ENCODE measurements at regions of chr19 and their contacts with region 1.

Region 1: GRCh38 chr19:40305403-40305802 is 20.3 kb upstream of the AKT2 start:
- DNase-seq: peak; percentile 83
- H3K4me3 ChIP-seq: no peak overlapping the region
- H3K27ac ChIP-seq: no peak overlapping the region
- H3K27me3 ChIP-seq: no peaks in the 10 kb centered on the region
- CTCF ChIP-seq: peak; percentile 79

Region 2: DNA sequence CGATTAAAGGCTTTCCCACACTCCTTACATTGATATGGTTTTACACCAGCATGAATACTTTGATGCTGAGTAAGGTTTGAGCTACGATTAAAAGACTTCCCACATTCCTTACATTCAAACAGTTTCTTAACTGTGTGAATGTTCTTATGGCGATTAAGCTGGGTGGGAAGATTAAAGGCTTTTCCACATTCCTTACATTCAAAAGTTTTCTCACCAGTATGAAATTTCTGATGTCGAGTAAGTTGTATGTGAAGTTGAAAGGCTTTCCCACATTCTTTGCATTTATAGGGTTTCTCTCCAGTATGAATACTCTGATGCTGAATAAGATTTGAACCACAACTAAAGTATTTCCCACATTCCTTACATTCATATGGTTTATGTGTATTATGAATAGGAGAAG is 269.4 kb before region 1 on chr19:
- CTCF ChIA-PET with region 1: no interaction called
- POLR2A ChIA-PET with region 1: no interaction called
- DNase-seq: no peak
- H3K4me3 ChIP-seq: no peak overlapping the region
- H3K27ac ChIP-seq: no peak overlapping the region
- H3K27me3 ChIP-seq: no peaks in the 10 kb centered on the region
- CTCF ChIP-seq: no peak

Region 3: DNA sequence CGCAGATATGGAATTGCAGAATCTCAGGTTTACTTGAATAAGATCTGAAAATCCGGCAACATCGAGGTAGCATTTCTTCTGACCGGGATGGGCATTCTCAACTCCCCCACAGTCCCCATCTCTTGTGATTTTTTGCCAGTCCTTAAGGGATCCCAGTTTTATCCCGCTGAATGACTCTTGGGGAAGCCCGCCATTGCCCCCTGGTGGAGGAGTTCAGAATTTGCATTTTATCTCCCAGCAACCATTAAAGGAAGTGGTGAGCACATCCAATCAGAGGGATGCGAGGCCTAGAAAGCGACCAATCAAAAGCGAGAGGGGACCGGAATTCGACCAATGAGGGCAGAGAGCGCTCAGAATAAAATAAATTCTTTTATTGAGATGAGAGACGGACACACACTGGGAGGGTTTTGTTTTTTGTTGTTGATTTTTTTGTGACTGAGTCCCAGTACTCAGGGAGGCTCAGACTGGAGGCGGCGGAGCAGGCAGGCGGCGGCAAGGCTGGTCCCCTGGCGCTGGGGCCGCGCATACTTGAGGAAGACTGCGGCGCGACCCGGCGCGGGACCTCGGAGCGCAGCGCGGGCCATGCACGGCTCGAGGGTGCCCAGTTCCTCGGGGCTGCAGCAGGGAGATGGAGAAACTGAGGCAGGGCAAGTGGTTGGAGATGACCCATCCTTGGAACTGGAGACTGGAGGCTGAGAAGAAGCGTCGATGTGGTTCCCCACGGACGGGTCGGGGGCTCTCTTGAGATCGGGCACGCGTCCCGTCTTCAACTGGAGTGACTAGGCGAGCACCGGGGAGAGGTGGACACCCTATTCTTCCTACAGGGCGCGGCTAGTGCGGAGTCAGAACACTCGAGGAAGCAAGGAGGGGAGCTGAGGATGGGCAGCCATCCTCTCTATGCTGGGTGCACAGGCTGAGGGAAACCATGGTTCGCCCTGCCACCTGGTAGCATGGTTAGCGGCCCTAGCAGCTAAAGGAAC is 83.3 kb before region 1 on chr19:
- CTCF ChIA-PET with region 1: no interaction called
- POLR2A ChIA-PET with region 1: no interaction called
- DNase-seq: peak; percentile 73
- H3K4me3 ChIP-seq: no peak overlapping the region
- H3K27ac ChIP-seq: no peak overlapping the region
- H3K27me3 ChIP-seq: peaks cover 12% of the 10 kb centered on the region
- CTCF ChIP-seq: peak; percentile 91

Region 4: GRCh38 chr19:40285353-40286234 is 19.8 kb before region 1 on chr19:
- CTCF ChIA-PET with region 1: interaction called, 11 read pairs
- POLR2A ChIA-PET with region 1: no interaction called
- DNase-seq: peak; percentile 99
- H3K4me3 ChIP-seq: peak overlapping the region; percentile 83
- H3K27ac ChIP-seq: peak overlapping the region; percentile 89
- H3K27me3 ChIP-seq: no peaks in the 10 kb centered on the region
- CTCF ChIP-seq: no peak

Region 5: DNA sequence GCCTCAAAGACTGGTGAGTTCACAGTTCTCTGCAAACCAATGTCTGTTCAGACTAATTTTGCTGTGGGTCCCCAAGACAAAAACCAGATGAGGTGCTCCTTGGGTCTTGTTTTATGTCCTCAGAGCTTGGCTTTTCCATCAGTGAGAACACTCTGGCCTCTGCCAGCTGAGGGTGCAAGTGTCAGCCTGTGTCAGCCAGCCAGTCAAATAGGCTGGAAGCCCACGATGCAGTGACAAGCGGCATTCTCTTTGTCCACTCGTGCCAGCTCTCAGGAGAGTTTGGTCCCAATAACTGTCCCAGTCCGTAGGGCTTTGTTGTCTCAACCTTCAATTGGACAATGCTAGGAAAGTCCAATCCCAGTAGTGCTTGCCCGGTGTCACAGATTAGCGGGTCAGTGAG is 10.8 kb before region 1 on chr19:
- CTCF ChIA-PET with region 1: interaction called, 14 read pairs
- POLR2A ChIA-PET with region 1: no interaction called
- DNase-seq: no peak
- H3K4me3 ChIP-seq: no peak overlapping the region
- H3K27ac ChIP-seq: no peak overlapping the region
- H3K27me3 ChIP-seq: no peaks in the 10 kb centered on the region
- CTCF ChIP-seq: no peak

Region 6: DNA sequence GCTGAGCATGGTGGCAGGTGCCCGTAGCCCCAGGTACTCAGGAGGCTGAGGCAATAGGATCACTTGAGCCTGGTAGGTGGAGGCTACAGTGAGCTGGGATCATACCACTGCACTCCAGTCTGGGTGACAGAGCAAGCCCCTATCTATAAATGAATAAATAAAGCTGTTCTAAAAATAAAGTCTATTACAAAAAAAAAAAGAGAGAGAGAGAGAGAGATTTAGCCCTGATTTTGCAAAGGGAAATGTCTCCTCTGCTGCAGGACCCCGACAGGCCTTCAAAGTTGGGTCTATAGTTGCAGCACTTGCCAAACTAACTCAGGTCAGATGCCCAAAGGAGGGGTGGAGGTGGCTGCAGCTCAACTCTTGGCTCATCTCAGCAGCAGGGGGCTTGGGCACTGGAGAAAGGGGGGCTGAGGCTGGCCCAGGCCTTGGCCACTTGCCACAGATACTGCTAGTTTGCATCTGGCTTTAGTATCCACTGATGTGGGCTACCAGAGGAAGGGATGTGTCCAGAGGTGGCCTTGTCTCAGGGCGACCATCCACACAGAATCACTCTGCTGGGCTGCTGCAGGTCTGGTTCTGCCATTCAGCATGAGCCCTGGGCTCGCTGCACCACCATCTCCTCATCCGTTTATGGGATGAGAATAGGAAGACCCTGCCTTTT is 10.5 kb after region 1 on chr19:
- CTCF ChIA-PET with region 1: interaction called, 12 read pairs
- POLR2A ChIA-PET with region 1: no interaction called
- DNase-seq: no peak
- H3K4me3 ChIP-seq: no peak overlapping the region
- H3K27ac ChIP-seq: no peak overlapping the region
- H3K27me3 ChIP-seq: no peaks in the 10 kb centered on the region
- CTCF ChIP-seq: no peak

Region 7: DNA sequence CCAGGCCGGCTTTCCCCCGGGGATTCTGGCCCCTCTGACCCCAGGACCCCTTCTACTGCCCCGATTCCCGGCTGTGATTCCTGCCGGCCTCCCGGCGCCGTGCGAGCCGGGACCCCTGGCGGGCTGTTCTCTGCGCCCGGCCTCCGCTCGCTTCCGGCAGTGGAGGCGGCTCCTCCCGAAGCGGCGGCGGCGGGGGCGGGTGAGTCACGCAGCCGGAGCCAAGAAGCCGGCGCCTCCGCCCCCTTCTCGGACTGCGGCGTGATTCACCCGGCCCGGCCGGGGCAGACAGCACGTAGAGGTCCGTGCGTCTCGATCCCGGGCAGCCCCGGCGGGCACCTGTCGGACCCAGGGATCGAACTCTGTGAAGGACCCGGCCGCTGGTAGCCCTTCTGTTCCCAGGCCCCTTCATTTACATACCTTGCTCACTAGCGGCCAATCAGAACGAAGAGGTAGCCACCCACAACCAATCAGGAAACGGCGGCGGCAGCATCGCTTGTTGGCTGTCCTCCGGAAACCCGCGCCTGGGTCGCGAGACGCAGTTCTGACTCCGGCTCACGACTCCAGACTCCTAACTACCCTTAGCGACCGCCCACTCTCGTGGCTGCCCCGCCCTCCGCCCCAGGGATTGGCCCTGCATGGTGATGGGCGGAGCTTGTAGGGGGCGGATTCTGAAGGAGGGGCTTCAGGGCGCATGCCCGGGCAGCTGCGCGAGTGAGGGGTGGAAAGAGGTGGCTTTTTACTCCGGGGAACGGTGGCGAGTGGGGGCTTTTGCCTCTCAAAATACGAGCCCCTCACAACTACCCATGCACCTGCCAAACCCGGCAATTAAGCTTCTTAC is 120.3 kb after region 1 on chr19 and contains the start of gene SERTAD1:
- CTCF ChIA-PET with region 1: interaction called, 16 read pairs
- POLR2A ChIA-PET with region 1: interaction called, 9 read pairs
- DNase-seq: peak; percentile 98
- H3K4me3 ChIP-seq: peak within 1 kb of the TSS; percentile 91
- H3K27ac ChIP-seq: peak within 1 kb of the TSS; percentile 98
- H3K27me3 ChIP-seq: no peaks in the 10 kb centered on the region
- CTCF ChIP-seq: peak; percentile 64
- polyA plus RNA-seq, gene SERTAD1: 11.9 and 16.2 TPM in 2 replicates

Region 8: GRCh38 chr19:40465557-40466150 is 160.3 kb after region 1 on chr19 and contains the start of gene BLVRB:
- CTCF ChIA-PET with region 1: interaction called, 12 read pairs
- POLR2A ChIA-PET with region 1: no interaction called
- DNase-seq: peak; percentile 99
- H3K4me3 ChIP-seq: peak within 1 kb of the TSS; percentile 74
- H3K27ac ChIP-seq: peak within 1 kb of the TSS; percentile 71
- H3K27me3 ChIP-seq: peaks cover 11% of the 10 kb centered on the region
- CTCF ChIP-seq: no peak
- polyA plus RNA-seq, gene BLVRB: 40.4 and 58.0 TPM in 2 replicates

Region 9: GRCh38 chr19:40521276-40521675 is 215.9 kb after region 1 on chr19:
- CTCF ChIA-PET with region 1: interaction called, 26 read pairs
- POLR2A ChIA-PET with region 1: no interaction called
- DNase-seq: no peak
- H3K4me3 ChIP-seq: no peak overlapping the region
- H3K27ac ChIP-seq: no peak overlapping the region
- H3K27me3 ChIP-seq: peaks cover 11% of the 10 kb centered on the region
- CTCF ChIP-seq: peak; percentile 50

Measured in AG04450 (cell line).